Transverse colon (tissue), 4 donors: ENCODE measurements at regions of chr1 and their contacts with region 1.

Region 1: GRCh38 chr1:235971571-235972310 is 93.1 kb downstream of the NID1 start:
- DNase-seq: peak; percentile 91
- H3K4me3 ChIP-seq: peak overlapping the region in 3 of 4 donors; percentile 21 to 38 (median 22)
- H3K27ac ChIP-seq: peak overlapping the region; percentile 86 to 91 (median 88)
- H3K4me1 ChIP-seq: peaks cover 0 to 21% (median 16%) of the 10 kb centered on the region in 4 donors
- H3K27me3 ChIP-seq: no peaks in the 10 kb centered on the region
- CTCF ChIP-seq: peak; percentile 76 to 86 (median 83)
- EP300 ChIP-seq: no peak
- POLR2A ChIP-seq: peak; percentile 42

Region 2: GRCh38 chr1:235504496-235505222 is 467.1 kb before region 1 on chr1:
- in situ Hi-C with region 1: loop called in 3 of 4 experiments (anchors 25 kb)
- intact Hi-C with region 1: no loop called
- DNase-seq: peak; percentile 100
- H3K4me3 ChIP-seq: peak overlapping the region; percentile 53 to 86 (median 78)
- H3K27ac ChIP-seq: peak overlapping the region; percentile 94 to 100 (median 98)
- H3K4me1 ChIP-seq: peaks cover 0 to 26% (median 22%) of the 10 kb centered on the region in 4 donors
- H3K27me3 ChIP-seq: no peaks in the 10 kb centered on the region
- CTCF ChIP-seq: peak; percentile 70 to 98 (median 83)
- EP300 ChIP-seq: peak; percentile 9
- POLR2A ChIP-seq: peak; percentile 74

Region 3: GRCh38 chr1:235527196-235527814 is 444.4 kb before region 1 on chr1:
- in situ Hi-C with region 1: loop called (anchors 10 to 25 kb)
- intact Hi-C with region 1: no loop called
- DNase-seq: no peak
- H3K4me3 ChIP-seq: no peak overlapping the region
- H3K27ac ChIP-seq: no peak overlapping the region
- H3K4me1 ChIP-seq: no peaks in the 10 kb centered on the region
- H3K27me3 ChIP-seq: no peaks in the 10 kb centered on the region
- CTCF ChIP-seq: no peak
- EP300 ChIP-seq: no peak
- POLR2A ChIP-seq: no peak

Region 4: GRCh38 chr1:235866913-235867845 is 104.6 kb before region 1 on chr1:
- in situ Hi-C with region 1: loop called in 2 of 4 experiments (anchors 10 to 25 kb)
- intact Hi-C with region 1: no loop called
- DNase-seq: peak; percentile 97
- H3K4me3 ChIP-seq: peak overlapping the region; percentile 91 to 97 (median 96)
- H3K27ac ChIP-seq: peak overlapping the region; percentile 94 to 100 (median 98)
- H3K4me1 ChIP-seq: peaks cover 4 to 35% (median 11%) of the 10 kb centered on the region in 4 donors
- H3K27me3 ChIP-seq: no peaks in the 10 kb centered on the region
- CTCF ChIP-seq: no peak
- EP300 ChIP-seq: no peak
- POLR2A ChIP-seq: peak; percentile 69